ENCODE measurements at regions of chr4 and their contacts with region 1.

Region 1: DNA sequence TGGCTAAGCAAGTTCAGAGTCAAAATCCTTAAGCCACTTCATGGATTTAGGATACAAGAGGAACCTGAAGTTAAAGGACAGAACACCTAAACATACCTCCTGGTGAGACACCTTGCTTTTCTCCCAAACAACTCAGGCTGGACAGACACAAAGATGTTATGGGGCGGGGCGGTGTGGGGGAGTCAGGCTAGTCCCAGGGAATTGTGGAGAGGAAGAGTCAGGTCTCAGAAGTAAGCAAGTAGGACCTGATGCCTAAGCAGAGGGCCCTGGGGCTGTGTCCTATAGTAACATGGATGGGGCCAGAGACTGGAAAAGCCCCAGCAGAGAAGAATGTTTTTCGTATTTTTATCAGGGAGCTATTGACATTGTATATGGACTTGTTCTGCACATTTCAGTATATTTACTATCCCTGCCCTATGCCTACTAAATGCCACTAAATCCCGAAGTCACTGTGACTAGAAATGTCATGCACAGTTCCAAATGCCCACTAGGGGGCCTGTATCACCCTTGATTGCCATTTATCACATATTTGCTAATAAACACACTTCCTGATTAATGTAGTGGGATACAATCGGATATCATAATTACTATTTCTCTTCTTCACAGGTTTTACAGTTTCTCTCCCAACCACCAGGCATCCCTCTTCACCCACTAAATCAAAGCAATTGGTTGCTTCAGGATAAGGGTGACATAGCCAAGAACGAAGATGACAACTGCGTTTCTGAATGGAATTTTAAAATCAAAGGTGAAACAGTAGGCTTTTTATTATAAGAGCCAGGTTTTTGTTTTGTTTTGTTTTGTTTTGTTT is 23.8 kb upstream of the ARHGAP10 start:
- DNase-seq: peak in 3 of 5 donors; percentile 36 to 67 (median 47)
- H3K4me3 ChIP-seq: no peak overlapping the region
- H3K27ac ChIP-seq: no peak overlapping the region
- H3K4me1 ChIP-seq: peaks cover 0 to 3% (median 0%) of the 10 kb centered on the region in 3 donors
- H3K27me3 ChIP-seq: no peaks in the 10 kb centered on the region
- CTCF ChIP-seq: peak; percentile 89

Region 2: GRCh38 chr4:147866532-147867271 is 158.6 kb after region 1 on chr4:
- intact Hi-C with region 1: loop called (anchors 5 kb)
- DNase-seq: peak; percentile 93 to 96 (median 95)
- H3K4me3 ChIP-seq: no peak overlapping the region
- H3K27ac ChIP-seq: no peak overlapping the region
- H3K4me1 ChIP-seq: no peaks in the 10 kb centered on the region
- H3K27me3 ChIP-seq: no peaks in the 10 kb centered on the region
- CTCF ChIP-seq: peak; percentile 100

Measured in kidney (tissue), 22 donors.